ENCODE measurements at regions of chr6 and their contacts with region 1.

Region 1: DNA sequence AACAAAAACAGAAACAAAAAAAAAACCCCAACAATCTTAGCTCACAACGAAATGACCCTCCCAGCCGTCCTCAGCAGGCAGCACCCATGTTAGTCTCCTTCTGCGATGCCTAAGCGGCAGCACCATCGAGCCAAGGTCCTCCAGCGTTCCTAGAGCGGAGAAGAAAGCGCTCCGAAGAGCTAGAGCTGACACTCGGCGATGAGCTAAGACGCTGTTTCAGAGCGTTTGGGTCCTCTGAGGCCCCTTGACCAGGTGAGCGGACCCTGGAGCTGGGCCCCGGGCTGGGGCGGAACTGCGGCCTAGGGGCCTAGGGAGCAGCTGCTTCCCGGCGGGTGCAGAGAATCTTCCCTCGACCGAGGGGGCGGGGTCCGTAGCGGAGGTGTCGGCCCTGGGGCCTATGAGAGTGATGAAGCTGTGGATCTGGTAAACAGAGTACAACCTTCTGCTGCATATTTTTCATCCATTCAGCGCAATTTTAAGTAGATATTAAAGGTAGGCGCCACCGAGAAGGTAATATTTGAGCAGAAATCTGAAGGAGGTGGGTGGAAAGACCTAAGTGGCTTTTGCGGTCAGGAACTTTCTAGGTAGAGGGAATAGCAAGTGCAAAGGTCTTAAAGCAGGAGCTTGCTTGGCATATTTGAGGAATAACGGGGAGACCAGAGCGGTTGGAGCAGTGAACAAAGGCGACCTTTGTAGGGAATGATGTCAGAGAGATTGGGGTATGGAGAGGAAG is at the start of gene ZSCAN26:
- DNase-seq: peak; percentile 83 to 93
- ATAC-seq: peak; percentile 96 to 97 (median 96)
- H3K4me3 ChIP-seq: peak within 1 kb of the TSS; percentile 100
- H3K4me3 Mint-ChIP-seq: no peak within 1 kb of the TSS
- H3K27ac ChIP-seq: peak within 1 kb of the TSS; percentile 90
- H3K27ac Mint-ChIP-seq: no peak within 1 kb of the TSS
- H3K4me1 ChIP-seq: peaks cover 6% of the 10 kb centered on the region
- H3K4me1 Mint-ChIP-seq: no peaks in the 10 kb centered on the region
- H3K27me3 ChIP-seq: no peaks in the 10 kb centered on the region
- H3K27me3 Mint-ChIP-seq: peaks cover 5 to 28% of the 10 kb centered on the region in 2 donors
- CTCF ChIP-seq: no peak
- total RNA-seq, gene ZSCAN26: 13.7 to 24.4 (median 15.4) TPM

Region 2: DNA sequence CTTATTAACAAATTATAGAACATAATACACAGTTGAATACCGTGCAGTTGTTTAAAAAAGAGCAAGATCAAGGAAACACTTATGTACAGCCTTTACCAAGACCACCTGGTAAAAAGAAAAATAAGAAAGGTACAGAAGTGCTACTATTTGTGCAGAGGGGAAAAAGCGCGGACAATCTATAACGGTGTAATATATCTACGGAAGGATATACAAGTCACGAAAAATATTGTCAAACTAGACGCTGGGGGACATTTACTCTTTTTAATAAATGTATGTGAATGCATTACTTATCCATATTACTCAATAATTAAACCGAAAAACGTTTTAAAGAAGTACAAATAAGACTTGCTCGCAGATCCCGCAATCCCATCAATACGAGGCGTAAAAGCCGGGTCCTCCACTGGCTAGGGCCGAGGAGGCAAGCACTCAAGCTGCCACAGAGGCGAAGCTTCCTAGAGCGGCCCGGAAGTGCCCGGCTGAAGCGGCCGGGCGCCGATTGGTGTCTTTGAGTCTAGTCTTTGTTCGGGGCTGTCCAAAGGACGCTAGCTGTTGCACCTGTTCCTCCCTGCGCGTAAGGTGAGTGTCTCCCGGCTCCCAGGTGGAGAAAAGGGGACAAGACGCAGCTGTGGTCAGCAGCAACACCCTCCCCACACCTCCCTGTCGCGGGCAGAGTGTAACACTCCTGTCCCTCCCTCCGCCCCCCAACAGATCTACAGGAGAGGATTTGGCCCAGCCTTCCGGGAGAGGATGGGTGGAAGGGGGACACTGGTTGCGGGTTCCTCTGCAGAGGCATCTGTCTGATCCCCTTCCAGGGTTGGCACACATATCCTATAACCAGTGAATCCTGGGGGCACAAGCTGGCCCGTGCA is 142.8 kb before region 1 on chr6 and contains the start of gene ZSCAN16:
- intact Hi-C with region 1: loop called (anchors 5 kb)
- DNase-seq: peak; percentile 76 to 84
- ATAC-seq: peak; percentile 96 to 98 (median 98)
- H3K4me3 ChIP-seq: peak within 1 kb of the TSS; percentile 60
- H3K4me3 Mint-ChIP-seq: peak within 1 kb of the TSS; percentile 92
- H3K27ac ChIP-seq: peak within 1 kb of the TSS; percentile 72
- H3K27ac Mint-ChIP-seq: peak within 1 kb of the TSS; percentile 85 to 89
- H3K4me1 ChIP-seq: peaks cover 9% of the 10 kb centered on the region
- H3K4me1 Mint-ChIP-seq: peaks cover 33 to 40% of the 10 kb centered on the region in 2 donors
- H3K27me3 ChIP-seq: no peaks in the 10 kb centered on the region
- H3K27me3 Mint-ChIP-seq: no peaks in the 10 kb centered on the region
- CTCF ChIP-seq: no peak
- total RNA-seq, gene ZSCAN16: 7.7 to 9.1 (median 7.8) TPM

Region 3: GRCh38 chr6:28218271-28219248 is 48.6 kb before region 1 on chr6:
- intact Hi-C with region 1: loop called (anchors 5 kb)
- DNase-seq: peak; percentile 31 to 56
- ATAC-seq: peak; percentile 69 to 83 (median 79)
- H3K4me3 ChIP-seq: peak overlapping the region; percentile 72
- H3K4me3 Mint-ChIP-seq: peak overlapping the region; percentile 91
- H3K27ac ChIP-seq: peak overlapping the region; percentile 51
- H3K27ac Mint-ChIP-seq: peak overlapping the region in 1 of 2 donors; percentile 49
- H3K4me1 ChIP-seq: peaks cover 11% of the 10 kb centered on the region
- H3K4me1 Mint-ChIP-seq: peaks cover 0 to 16% of the 10 kb centered on the region in 2 donors
- H3K27me3 ChIP-seq: peaks cover 17% of the 10 kb centered on the region
- H3K27me3 Mint-ChIP-seq: peaks cover 44 to 63% of the 10 kb centered on the region in 2 donors
- CTCF ChIP-seq: no peak

Region 4: DNA sequence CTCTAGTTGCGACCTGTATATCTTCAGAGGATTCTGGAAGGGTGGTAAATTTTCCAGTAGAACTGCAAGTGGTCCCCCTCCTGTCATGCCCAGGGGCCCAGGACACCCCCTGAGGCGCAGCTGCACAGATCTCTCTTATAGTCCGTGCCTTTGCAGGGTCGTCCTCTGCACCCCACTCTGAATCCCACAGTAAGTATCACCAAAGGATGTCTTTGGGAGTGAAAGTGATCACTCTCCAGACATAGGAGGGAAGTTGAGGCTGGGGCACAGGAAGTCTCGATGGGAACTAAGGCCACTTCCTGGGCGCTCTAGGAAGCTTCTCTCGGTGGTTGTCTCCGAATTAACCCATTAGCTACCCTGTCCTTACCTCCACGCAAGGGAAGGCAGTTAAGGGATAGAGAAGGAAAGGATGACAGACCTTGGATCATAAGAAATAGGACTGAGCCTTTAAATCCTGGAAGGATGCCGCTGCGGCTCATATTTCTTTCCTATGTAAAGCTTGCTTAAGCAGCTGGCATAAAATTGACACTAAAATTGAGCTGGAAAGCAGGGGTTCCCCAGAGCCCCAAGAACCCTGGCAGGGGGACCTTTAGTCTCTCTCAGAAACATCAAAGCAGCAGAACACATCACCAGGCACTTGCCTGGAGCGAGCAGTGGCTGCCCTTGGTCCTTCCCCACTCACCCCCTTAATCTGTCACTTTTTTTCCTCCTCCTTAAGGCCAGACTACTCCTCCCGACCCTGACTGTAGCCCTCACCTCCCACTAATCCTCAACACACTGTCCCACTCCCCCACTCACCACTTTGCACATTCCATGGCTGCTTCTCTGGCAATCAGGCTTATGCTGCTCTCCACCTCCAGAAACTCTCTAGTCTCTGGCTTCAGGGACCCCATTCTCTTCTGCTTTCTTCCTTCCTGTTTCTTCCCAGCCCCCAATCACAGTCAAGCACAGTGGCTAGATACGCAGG is 14.8 kb before region 1 on chr6 and contains the start of gene ZKSCAN4:
- intact Hi-C with region 1: loop called (anchors 1 kb)
- DNase-seq: peak; percentile 64 to 92
- ATAC-seq: peak; percentile 90 to 93 (median 91)
- H3K4me3 ChIP-seq: peak within 1 kb of the TSS; percentile 81
- H3K4me3 Mint-ChIP-seq: peak within 1 kb of the TSS; percentile 98
- H3K27ac ChIP-seq: peak within 1 kb of the TSS; percentile 59
- H3K27ac Mint-ChIP-seq: peak within 1 kb of the TSS; percentile 68 to 88
- H3K4me1 ChIP-seq: peaks cover 12% of the 10 kb centered on the region
- H3K4me1 Mint-ChIP-seq: peaks cover 31 to 38% of the 10 kb centered on the region in 2 donors
- H3K27me3 ChIP-seq: peaks cover 3% of the 10 kb centered on the region
- H3K27me3 Mint-ChIP-seq: peaks cover 3 to 8% of the 10 kb centered on the region in 2 donors
- CTCF ChIP-seq: no peak
- total RNA-seq, gene ZKSCAN4: 1.6 to 4.2 (median 2.9) TPM

Region 5: GRCh38 chr6:28335564-28336283 is 68.6 kb after region 1 on chr6 and contains the start of gene ZSCAN31:
- intact Hi-C with region 1: loop called (anchors 1 kb)
- DNase-seq: peak; percentile 78 to 91
- ATAC-seq: peak; percentile 86 to 95 (median 89)
- H3K4me3 ChIP-seq: peak within 1 kb of the TSS; percentile 78
- H3K4me3 Mint-ChIP-seq: no peak within 1 kb of the TSS
- H3K27ac ChIP-seq: peak within 1 kb of the TSS; percentile 93
- H3K27ac Mint-ChIP-seq: no peak within 1 kb of the TSS
- H3K4me1 ChIP-seq: peaks cover 18% of the 10 kb centered on the region
- H3K4me1 Mint-ChIP-seq: peaks cover 0 to 15% of the 10 kb centered on the region in 2 donors
- H3K27me3 ChIP-seq: no peaks in the 10 kb centered on the region
- H3K27me3 Mint-ChIP-seq: peaks cover 0 to 11% of the 10 kb centered on the region in 2 donors
- CTCF ChIP-seq: no peak
- total RNA-seq, gene ZSCAN31: 0.65 to 2.2 (median 0.72) TPM

Region 6: GRCh38 chr6:28355743-28356665 is 88.9 kb after region 1 on chr6:
- intact Hi-C with region 1: loop called (anchors 2 kb)
- DNase-seq: peak; percentile 55 to 86
- ATAC-seq: peak; percentile 91 to 96 (median 91)
- H3K4me3 ChIP-seq: peak overlapping the region; percentile 64
- H3K4me3 Mint-ChIP-seq: peak overlapping the region; percentile 96
- H3K27ac ChIP-seq: peak overlapping the region; percentile 43
- H3K27ac Mint-ChIP-seq: peak overlapping the region; percentile 81 to 93
- H3K4me1 ChIP-seq: peaks cover 18% of the 10 kb centered on the region
- H3K4me1 Mint-ChIP-seq: peaks cover 20 to 23% of the 10 kb centered on the region in 2 donors
- H3K27me3 ChIP-seq: no peaks in the 10 kb centered on the region
- H3K27me3 Mint-ChIP-seq: no peaks in the 10 kb centered on the region
- CTCF ChIP-seq: peak; percentile 91

Region 7: DNA sequence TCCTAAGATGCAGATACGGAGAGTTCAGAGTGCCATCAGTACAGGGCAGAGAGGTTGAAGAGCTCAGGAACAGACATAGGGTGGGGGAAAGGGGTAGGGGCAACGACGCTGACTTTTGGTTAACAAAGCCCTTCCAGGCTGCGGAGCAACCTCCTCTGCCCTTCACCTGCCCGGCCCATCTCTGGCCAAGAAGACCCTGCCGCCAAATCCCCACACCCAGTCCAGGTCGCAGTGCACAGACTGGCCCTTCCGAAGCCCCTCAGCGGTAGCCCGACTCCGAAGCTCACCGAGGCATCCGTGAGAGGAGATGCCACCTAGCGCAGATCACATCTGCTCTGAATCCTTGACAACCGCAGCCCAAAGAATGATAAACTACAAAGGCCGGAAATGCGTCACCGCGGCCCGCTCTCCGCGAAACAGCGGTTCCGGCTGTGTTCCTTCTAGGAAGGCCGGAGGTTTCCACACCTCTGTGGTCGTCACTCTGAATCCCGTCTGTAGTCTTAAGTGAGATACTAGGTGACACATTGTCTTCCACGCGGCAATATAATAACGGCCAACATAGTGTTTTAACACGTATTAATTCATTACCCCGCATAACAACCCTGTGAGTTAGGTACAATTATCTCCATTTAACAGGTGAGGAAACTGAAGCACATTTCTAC is 176.1 kb after region 1 on chr6 and contains the start of gene ZSCAN23:
- intact Hi-C with region 1: no loop called
- DNase-seq: peak; percentile 70 to 94
- ATAC-seq: peak; percentile 86 to 92 (median 88)
- H3K4me3 ChIP-seq: peak within 1 kb of the TSS; percentile 38
- H3K4me3 Mint-ChIP-seq: peak within 1 kb of the TSS; percentile 87
- H3K27ac ChIP-seq: peak within 1 kb of the TSS; percentile 28
- H3K27ac Mint-ChIP-seq: peak within 1 kb of the TSS; percentile 71 to 87
- H3K4me1 ChIP-seq: peaks cover 16% of the 10 kb centered on the region
- H3K4me1 Mint-ChIP-seq: peaks cover 22 to 27% of the 10 kb centered on the region in 2 donors
- H3K27me3 ChIP-seq: peaks cover 16% of the 10 kb centered on the region
- H3K27me3 Mint-ChIP-seq: peaks cover 19 to 21% of the 10 kb centered on the region in 2 donors
- CTCF ChIP-seq: no peak
- total RNA-seq, gene ZSCAN23: 0.36 to 0.55 TPM in 2 of 3 donors, not detected in the other

Measured in natural killer cell (primary cell).